Activated CD8-positive, alpha-beta T cell treated with anti-CD3 and anti-CD28 coated beads, Interleukin-2, amount 10 ng/mL, durations not matched to agents 7 days and 5 days (primary cell): ENCODE measurements at regions of chr11 and their contacts with region 1.

Region 1: DNA sequence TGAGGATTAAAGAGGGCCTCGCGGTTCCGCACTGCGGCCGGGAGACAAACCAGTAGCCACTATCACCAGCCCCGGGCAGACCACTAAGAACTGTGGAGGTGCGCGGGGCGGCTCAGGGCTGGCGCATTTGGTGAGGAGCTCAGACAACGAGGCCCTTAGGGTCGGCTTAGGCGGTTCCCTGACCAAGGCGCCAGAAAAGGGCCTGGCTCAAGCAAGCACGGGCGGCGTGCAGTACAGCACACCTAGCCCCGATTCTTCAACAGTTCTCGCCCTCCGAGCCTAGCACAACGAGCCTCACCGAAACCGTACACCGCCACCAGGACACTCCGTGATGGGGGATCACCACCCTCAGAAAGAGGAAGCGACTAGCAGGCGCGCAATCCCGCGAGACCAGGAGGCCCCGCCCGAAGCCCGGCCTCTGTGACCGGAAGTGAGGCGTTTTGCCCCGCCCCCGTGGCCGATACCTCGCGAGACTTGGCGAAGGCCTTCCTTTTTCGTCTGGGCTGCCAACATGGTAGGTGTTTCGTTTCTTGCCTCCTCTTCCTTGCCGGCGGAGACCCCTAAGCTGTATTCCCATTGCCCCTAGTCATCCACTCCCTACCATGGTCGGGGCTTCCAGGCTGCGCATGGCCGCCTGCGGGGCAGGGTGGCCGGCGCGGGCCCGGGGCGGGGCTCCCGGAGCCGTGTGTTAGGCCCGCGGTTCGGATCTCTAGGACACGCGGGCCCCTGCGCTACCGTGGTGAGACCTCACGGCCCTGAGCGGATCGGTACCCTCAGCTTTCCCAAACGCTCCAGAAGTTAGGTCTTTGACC is at the starts of genes RPL27A and TRIM66:
- DNase-seq: peak; percentile 98
- ATAC-seq: peak; percentile 96
- H3K4me3 Mint-ChIP-seq: peak within 1 kb of the TSS; percentile 95
- H3K27ac Mint-ChIP-seq: peak within 1 kb of the TSS; percentile 97
- H3K4me1 Mint-ChIP-seq: peaks cover 45% of the 10 kb centered on the region
- H3K27me3 Mint-ChIP-seq: no peaks in the 10 kb centered on the region
- total RNA-seq, gene RPL27A: 716 to 768 TPM
- total RNA-seq, gene TRIM66: 28.1 to 28.2 TPM

Region 2: DNA sequence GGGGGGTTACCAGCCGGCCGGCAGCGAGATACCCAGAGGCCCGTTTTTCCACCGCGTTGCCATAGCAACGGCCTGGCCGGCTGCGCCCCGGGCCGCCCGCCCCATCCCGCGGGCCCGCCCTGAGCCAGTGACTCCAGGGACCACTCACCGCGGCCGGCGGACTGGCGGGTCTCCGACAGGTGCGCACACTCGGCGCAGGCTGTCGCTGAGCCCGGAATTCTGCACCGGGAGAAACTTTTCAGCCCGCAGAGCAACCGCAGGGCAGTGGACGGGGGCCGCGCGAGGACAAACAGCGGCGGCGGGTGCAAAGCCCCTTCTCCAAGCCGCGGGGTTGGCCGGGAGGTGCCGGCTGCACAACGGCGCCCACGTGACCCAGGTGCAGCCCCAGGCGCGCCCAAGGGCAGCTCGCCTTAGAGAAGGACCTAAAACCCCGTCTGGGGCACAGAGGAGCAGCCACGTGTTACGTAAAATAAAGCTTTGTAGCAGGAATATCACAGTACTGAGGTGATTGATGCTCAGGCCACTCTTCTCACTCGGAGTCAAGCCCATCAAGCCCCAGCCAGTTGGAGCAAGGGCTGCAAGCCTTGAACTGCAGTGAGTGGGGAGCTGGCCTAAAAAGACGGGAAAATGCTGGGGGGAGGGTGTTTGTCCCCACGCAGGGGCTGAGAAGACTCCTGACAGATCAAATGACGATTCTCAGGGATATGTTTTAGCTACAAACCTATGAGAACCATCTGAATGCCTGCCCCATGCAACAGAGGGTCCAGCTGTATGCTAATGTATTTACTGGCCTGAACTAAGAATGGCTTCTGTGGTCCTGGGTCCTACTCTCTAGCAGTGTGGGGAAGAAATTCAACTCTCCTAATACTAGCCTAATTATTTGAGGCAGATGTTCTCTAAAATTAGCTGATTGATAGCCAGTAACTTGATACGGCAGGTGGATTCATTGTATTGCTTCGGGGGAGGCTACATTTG is 88.3 kb before region 1 on chr11 and contains the start of gene STK33:
- CTCF ChIA-PET with region 1: no interaction called
- POLR2A ChIA-PET with region 1: no interaction called
- DNase-seq: peak; percentile 68
- ATAC-seq: peak; percentile 94
- H3K4me3 Mint-ChIP-seq: peak within 1 kb of the TSS; percentile 77
- H3K27ac Mint-ChIP-seq: no peak within 1 kb of the TSS
- H3K4me1 Mint-ChIP-seq: peaks cover 11% of the 10 kb centered on the region
- H3K27me3 Mint-ChIP-seq: peaks cover 48% of the 10 kb centered on the region
- total RNA-seq, gene STK33: 3.7 to 3.9 TPM

Region 3: DNA sequence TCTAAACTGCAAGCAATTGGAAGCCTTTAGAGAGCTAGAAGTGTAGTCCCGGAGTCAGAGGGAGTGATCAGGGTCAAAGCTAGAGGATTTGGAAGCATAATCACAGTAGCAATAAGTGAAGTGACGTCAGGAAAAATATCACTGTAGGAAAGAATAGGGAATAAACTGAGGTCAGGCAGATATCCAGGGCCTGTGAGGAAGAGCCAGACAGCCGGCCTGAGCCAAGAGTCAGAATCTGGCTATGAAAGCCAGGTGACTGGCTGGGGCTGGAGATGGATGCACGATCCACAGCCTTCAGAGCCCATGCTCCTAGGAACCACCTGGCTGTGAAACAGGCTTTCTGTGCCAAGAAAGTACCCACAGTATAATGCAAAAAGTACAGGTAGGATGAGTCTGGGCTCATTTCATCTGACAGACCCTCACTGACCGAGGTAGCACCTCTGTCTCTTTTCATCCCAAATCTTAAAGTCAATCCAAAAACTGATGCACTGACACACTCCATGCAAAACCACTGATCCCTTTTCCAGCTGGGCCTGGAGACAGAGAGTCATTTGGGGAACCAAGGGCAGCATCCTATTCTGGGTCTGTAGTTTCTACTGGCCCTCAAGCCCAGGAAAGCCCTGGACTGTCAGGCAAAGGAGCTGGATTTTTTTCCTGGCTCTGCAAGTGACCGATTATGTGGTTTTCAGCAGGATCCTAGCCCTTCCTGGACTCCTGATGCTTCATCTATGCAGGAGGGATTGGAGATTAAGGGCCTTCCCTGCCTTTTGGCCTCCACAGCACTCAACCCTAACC is 21.3 kb before region 1 on chr11:
- CTCF ChIA-PET with region 1: interaction called, 5 read pairs
- POLR2A ChIA-PET with region 1: interaction called, 13 read pairs
- DNase-seq: no peak
- ATAC-seq: no peak
- H3K4me3 Mint-ChIP-seq: no peak overlapping the region
- H3K27ac Mint-ChIP-seq: no peak overlapping the region
- H3K4me1 Mint-ChIP-seq: no peaks in the 10 kb centered on the region
- H3K27me3 Mint-ChIP-seq: no peaks in the 10 kb centered on the region

Region 4: DNA sequence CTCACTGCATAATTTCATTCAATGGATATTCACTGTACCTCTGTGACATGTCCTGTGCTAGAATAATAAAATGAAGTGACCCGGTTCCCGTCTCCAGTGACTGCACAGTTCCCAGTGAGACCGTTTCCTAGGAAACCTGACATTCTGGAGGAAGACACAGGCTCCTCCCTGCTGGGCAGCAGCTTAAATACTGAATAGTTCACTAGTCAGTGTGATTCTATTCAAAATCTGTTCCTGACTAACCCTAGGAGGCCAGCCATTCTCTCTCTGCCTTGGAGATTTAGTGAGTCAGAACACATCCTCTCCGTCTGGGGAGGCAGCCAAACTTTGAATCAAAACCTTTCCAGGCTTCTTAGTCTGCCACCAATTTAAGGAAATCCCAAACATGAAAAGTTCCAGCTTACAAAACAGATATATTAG is 11.3 kb before region 1 on chr11:
- CTCF ChIA-PET with region 1: interaction called, 5 read pairs
- POLR2A ChIA-PET with region 1: interaction called, 38 read pairs
- DNase-seq: no peak
- ATAC-seq: no peak
- H3K4me3 Mint-ChIP-seq: no peak overlapping the region
- H3K27ac Mint-ChIP-seq: no peak overlapping the region
- H3K4me1 Mint-ChIP-seq: peaks cover 5% of the 10 kb centered on the region
- H3K27me3 Mint-ChIP-seq: no peaks in the 10 kb centered on the region